ENCODE measurements at regions of chr20 and their contacts with region 1.

Region 1: DNA sequence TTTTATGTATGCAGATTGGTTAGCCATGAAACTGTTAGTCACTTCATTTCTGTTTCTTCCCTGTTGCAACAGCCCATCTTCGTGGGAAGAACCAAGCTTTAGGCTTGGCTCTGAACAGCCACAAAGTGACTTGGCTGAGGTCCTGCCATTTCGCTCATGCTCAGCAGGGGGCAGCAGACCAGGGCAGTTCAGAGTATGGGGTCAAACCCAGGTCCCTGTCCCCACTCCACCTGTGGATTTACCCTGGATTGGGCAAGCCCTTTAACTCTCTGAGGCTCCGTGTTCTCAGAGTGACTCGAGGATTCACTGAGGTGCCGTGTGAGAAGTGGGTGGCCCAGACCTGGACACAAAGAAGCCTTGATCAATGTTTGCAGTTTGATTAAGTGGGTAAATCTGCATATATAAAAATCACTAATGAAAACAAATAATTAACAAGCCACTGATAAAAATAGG is 19.8 kb upstream of the MAP1LC3A start:
- ATAC-seq: peak in 5 of 8 experiments; percentile 22 to 47 (median 36)
- H3K4me3 ChIP-seq: no peak overlapping the region
- H3K27ac ChIP-seq: no peak overlapping the region
- H3K4me1 ChIP-seq: peaks cover 4 to 7% of the 10 kb centered on the region in 2 donors

Region 2: DNA sequence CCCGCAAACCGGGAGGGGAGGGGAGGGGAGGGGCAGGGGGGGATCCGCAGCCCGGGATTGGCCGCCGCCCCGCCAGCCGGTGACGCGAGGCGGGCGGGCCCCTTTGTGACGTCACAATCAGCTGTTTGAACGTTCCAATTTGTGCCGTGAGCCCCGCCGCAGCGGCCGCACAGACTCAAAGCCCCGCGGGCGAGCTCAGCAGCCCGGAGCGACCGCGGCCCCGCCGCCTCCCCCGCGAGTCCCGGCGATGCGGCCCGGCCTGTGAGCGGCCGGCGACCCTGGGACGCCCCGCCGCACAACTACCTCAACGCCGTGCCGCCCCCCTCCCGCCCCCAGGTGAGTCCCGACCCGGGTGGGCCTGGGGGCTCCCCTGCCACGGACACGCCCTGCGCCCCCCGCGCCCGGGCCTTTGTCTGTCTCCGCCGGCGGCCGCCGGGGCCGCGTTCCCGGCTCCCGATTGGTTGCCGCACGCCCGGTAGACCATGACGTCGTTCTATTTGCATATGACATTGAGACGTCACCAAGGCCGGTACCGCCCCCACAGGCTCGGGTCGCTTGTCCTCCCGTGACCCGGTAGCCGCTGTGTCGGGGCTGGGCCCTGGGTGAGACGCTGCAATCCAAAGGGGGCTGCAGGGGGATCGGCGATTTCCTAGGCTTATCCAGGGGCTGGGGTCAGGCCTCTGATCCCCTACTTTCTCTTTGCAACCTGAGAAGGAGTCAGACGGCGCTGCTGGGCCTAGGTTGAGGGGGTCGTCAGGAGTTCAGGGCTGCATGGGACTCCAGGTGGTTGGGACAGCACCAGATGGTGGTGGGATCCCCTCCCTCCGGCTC is 165.7 kb after region 1 on chr20 and contains the start of gene TP53INP2:
- in situ Hi-C with region 1: loop called in 1 of 9 experiments (anchors 25 kb)
- ATAC-seq: peak; percentile 58 to 75 (median 65)
- H3K4me3 ChIP-seq: peak within 1 kb of the TSS; percentile 75 to 99 (median 91)
- H3K27ac ChIP-seq: peak within 1 kb of the TSS; percentile 93 to 99
- H3K4me1 ChIP-seq: peaks cover 7 to 11% of the 10 kb centered on the region in 2 donors
- total RNA-seq, gene TP53INP2: 3.7 to 15.3 (median 11.0) TPM

Measured in motor neuron (in vitro differentiated cells).